ENCODE measurements at regions of chr3 and their contacts with region 1.

Region 1: GRCh38 chr3:31550452-31551251 is 17.9 kb downstream of the STT3B start:
- DNase-seq: no peak
- ATAC-seq: peak; percentile 34 to 51
- H3K4me3 ChIP-seq: no peak overlapping the region
- H3K27ac ChIP-seq: no peak overlapping the region
- H3K4me1 ChIP-seq: no peaks in the 10 kb centered on the region
- H3K27me3 ChIP-seq: no peaks in the 10 kb centered on the region

Region 2: DNA sequence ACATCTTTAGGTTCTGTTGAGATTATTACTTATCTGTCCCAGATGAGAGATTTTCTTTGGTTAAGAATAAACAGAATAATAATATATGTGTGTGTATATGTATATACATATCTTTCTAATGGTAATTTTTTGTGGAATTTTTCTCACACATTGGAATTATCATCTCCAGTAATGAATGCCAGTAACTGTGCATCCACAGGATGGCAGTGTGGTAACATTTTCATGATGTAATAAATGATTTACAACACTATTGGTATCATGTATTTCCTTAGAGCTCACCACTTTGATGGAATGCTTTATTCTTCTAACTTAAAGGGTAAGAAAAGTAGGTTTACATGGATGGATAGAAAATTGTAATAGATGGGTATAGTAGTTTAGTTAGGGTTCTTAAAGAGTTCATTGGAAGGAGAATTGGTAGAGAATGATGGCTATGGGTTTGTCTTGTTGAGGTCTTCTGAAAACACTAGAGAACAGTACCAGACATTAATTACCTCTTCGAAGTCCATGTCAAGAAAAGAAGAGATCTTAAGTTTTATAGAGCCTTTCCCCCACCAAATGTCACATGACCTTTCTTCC is 60.1 kb after region 1 on chr3:
- intact Hi-C with region 1: loop called in 1 of 4 experiments (anchors 10 kb)
- DNase-seq: no peak
- ATAC-seq: peak in 1 of 2 donors; percentile 37
- H3K4me3 ChIP-seq: no peak overlapping the region
- H3K27ac ChIP-seq: no peak overlapping the region
- H3K4me1 ChIP-seq: no peaks in the 10 kb centered on the region
- H3K27me3 ChIP-seq: no peaks in the 10 kb centered on the region

Region 3: DNA sequence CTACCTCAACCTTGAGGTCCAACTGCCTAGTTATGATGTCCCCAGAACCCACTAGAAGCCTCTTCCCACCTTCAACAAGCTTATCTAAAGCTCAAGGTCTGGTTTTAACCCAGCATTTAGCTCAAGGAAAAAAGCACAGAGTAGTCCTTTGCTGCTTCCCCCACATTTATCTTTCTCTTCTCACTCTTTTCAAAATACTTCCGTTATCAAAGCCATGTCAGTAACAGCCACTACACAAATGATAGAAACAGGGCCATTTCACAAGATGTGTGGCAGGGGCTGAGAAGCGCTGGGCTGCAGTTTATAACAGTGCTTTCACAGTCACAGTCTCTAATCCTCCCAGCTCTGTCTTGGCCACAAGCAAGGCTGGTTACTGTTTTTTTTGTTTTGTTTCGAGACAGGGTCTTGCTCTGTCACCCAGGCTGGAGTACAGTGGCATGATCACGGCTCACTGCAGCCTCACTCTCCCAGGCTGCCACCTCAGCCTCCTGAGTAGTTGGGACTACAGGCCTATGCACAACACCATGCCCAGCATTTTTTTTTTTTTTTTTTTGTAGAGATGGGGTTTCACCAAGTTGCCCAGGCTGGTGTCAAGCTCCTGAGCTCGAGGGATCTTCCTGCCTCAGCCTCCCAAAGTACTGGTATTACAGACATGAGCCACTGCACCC is 211.6 kb after region 1 on chr3:
- intact Hi-C with region 1: loop called in 2 of 4 experiments (anchors 5 to 10 kb)
- DNase-seq: no peak
- ATAC-seq: peak; percentile 81 to 89
- H3K4me3 ChIP-seq: no peak overlapping the region
- H3K27ac ChIP-seq: no peak overlapping the region
- H3K4me1 ChIP-seq: peaks cover 3% of the 10 kb centered on the region
- H3K27me3 ChIP-seq: no peaks in the 10 kb centered on the region

Region 4: GRCh38 chr3:31768479-31769123 is 217.9 kb after region 1 on chr3:
- intact Hi-C with region 1: loop called in 2 of 4 experiments (anchors 5 to 10 kb)
- DNase-seq: peak; percentile 38 to 73 (median 60)
- ATAC-seq: peak; percentile 45 to 74
- H3K4me3 ChIP-seq: no peak overlapping the region
- H3K27ac ChIP-seq: no peak overlapping the region
- H3K4me1 ChIP-seq: peaks cover 1% of the 10 kb centered on the region
- H3K27me3 ChIP-seq: no peaks in the 10 kb centered on the region